GM10248 (cell line): ENCODE measurements at regions of chr6 and their contacts with region 1.

Region 1: DNA sequence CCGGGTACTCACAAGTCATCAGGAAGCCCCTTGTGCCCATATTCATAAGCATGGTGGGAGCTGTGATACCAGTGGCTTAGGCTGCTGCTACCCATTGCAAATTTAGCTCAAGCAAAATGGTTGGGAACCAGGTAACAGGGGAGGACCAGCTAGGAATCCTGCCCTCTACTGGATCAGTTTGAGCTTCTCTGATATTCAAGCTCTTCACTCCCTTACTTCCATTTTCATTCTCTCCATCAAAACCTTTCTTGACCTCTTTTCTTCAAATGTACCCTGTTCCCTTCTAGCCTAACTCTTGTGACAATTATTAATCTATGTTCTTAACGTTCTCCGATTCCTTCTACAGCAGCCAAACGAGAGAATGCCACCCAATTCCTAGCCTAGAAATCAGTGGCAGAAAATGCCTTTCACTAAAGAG is 9.7 kb downstream of the NOL7 start:
- DNase-seq: peak; percentile 40
- CTCF ChIP-seq: peak; percentile 41

Region 2: DNA sequence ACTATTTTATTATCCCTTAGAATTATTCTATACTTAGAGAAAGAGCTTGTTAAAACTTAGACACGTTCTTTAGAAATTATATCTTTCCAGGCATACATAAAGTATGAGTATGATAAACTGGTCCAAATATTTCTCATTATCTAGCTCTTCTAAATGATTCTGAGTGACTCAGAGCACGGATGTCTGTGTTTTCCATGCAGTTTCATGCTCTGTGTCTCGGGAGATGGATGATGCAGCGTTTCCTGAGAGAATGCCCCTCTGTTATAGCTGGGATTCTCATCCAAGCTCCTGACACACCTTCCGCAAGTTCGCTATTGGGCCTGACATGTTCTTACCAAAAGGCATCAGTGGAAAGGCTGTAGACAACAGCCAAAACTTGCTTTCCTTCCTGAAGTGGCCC is 31.2 kb before region 1 on chr6:
- CTCF ChIA-PET with region 1: no interaction called
- POLR2A ChIA-PET with region 1: no interaction called
- DNase-seq: no peak
- CTCF ChIP-seq: no peak

Region 3: DNA sequence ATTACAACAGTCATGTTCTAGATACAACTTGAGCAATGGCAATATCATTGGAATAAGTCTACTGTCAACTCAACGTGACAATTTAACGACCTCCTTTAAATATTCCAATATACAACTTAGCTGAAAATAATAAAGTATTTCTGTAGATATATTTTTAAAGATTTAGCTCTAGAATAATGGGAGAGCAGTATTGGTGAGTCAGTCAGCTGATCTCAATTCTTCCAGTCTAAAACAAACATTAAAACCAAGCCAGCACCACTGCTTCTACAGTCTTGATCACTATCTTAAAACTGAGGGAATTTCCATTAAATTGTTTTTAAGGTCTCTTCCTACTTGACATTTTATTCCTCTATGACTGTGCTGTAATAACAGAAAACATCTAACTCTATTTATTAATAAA is 28.4 kb after region 1 on chr6:
- CTCF ChIA-PET with region 1: interaction called, 10 read pairs
- POLR2A ChIA-PET with region 1: no interaction called
- DNase-seq: no peak
- CTCF ChIP-seq: no peak

Region 4: DNA sequence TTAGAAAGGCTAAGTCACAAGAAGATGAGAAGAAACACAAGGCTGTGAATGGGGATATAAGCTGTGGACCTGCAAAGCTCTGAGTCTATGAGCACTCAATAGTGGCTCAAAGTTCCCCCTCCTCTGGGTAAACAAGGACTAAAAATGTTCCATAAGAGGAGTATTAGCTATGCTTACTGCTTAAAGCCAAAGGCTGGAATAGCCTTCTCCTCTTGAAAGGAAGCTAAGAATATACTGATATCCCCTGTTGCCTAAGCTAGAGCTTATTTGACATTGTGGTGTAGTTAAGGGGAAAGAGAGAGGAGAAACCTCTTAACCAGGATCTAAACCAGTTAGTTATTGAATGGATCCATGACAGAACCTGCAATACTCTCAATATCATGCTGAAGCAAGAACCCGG is 36.0 kb after region 1 on chr6:
- CTCF ChIA-PET with region 1: no interaction called
- POLR2A ChIA-PET with region 1: interaction called, 11 read pairs
- DNase-seq: no peak
- CTCF ChIP-seq: no peak

Region 5: GRCh38 chr6:13795041-13795750 is 170.3 kb after region 1 on chr6:
- CTCF ChIA-PET with region 1: no interaction called
- POLR2A ChIA-PET with region 1: no interaction called
- DNase-seq: peak; percentile 80
- CTCF ChIP-seq: peak; percentile 94

Region 6: GRCh38 chr6:14108571-14109410 is 483.9 kb after region 1 on chr6:
- CTCF ChIA-PET with region 1: no interaction called
- POLR2A ChIA-PET with region 1: no interaction called
- DNase-seq: peak; percentile 68
- CTCF ChIP-seq: no peak